WTC11 (cell line): ENCODE measurements at regions of chr5 and their contacts with region 1.

Region 1: DNA sequence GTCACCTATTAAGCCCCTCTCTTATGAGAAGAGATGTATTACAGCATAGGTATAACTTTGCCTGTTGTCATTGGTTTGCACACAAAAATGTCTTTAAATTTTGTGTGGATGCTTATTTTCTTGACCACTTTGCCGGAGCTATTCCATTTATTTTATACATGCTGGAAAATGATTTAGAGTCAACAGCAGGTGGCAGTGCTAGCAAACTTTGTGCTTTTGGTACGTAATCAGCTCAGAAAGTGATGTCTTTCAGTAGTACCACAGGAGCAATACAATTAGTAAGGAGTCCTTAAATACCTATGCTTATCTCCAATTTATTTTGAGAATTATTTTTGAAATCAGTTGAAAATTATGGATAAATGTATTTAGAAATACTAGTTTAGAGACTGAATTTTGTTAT is 19.8 kb upstream of the NUDT12 start:
- DNase-seq: peak; percentile 36
- ATAC-seq: peak; percentile 55; the same call in 1 of the 2 replicates
- H3K4me3 Mint-ChIP-seq: no peak overlapping the region
- H3K27ac Mint-ChIP-seq: no peak overlapping the region
- H3K4me1 Mint-ChIP-seq: no peaks in the 10 kb centered on the region
- H3K27me3 Mint-ChIP-seq: no peaks in the 10 kb centered on the region
- CTCF ChIP-seq: peak; percentile 36; the same call in 1 of the 2 replicates

Region 2: GRCh38 chr5:103526164-103526915 is 56.0 kb before region 1 on chr5:
- CTCF ChIA-PET with region 1: no interaction called
- POLR2A ChIA-PET with region 1: no interaction called
- DNase-seq: no peak
- ATAC-seq: no peak
- H3K4me3 Mint-ChIP-seq: no peak overlapping the region
- H3K27ac Mint-ChIP-seq: no peak overlapping the region
- H3K4me1 Mint-ChIP-seq: peaks cover 7% of the 10 kb centered on the region
- H3K27me3 Mint-ChIP-seq: no peaks in the 10 kb centered on the region
- CTCF ChIP-seq: no peak

Region 3: GRCh38 chr5:103808464-103809106 is 226.2 kb after region 1 on chr5:
- CTCF ChIA-PET with region 1: interaction called, 22 read pairs
- POLR2A ChIA-PET with region 1: no interaction called
- DNase-seq: peak; percentile 28
- ATAC-seq: peak; percentile 99
- H3K4me3 Mint-ChIP-seq: no peak overlapping the region
- H3K27ac Mint-ChIP-seq: no peak overlapping the region
- H3K4me1 Mint-ChIP-seq: peaks cover 13% of the 10 kb centered on the region
- H3K27me3 Mint-ChIP-seq: no peaks in the 10 kb centered on the region
- CTCF ChIP-seq: peak; percentile 69

Region 4: DNA sequence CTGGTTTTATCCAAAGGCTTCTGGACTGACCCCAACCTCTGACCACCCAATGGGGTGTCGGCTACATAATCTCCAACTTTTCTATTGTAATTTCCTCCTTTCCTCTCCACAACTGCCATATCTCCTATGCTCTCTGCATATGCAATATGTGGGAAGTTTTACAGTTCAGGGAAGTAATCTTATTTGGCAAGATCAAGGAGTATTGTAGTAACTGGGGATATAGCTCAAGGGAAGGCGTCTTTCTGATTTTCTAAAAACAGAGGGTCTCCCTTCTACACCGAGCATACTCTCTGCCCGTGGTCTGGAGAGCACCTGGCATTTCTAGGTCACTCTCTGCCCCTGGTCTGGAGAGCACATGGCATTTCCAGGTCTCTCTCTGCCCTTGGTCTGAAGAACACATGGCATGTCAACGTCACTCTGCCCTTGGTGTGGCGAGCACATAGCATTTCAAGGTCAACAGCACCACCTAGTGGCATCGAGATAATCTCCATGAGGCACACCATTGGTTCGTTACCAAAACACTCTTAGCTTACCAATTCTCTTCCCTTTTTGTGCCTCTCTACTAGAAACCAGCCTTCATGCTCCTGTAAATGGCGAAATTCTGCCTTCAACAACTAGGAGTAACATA is 596.6 kb after region 1 on chr5:
- CTCF ChIA-PET with region 1: interaction called, 19 read pairs
- POLR2A ChIA-PET with region 1: no interaction called
- DNase-seq: peak; percentile 69
- ATAC-seq: peak; percentile 95
- H3K4me3 Mint-ChIP-seq: no peak overlapping the region
- H3K27ac Mint-ChIP-seq: no peak overlapping the region
- H3K4me1 Mint-ChIP-seq: no peaks in the 10 kb centered on the region
- H3K27me3 Mint-ChIP-seq: peaks cover 10% of the 10 kb centered on the region
- CTCF ChIP-seq: peak; percentile 86